Activated CD4-positive, alpha-beta T cell treated with anti-CD3 and anti-CD28 coated beads for 36 hours (primary cell): ENCODE measurements at regions of chr6 and their contacts with region 1.

Region 1: GRCh38 chr6:38493931-38494547 is 145.7 kb downstream of the BTBD9 start:
- DNase-seq: peak; percentile 89
- ATAC-seq: no peak
- H3K4me3 Mint-ChIP-seq: no peak overlapping the region
- H3K27ac Mint-ChIP-seq: no peak overlapping the region
- H3K4me1 Mint-ChIP-seq: peaks cover 7% of the 10 kb centered on the region
- H3K27me3 Mint-ChIP-seq: no peaks in the 10 kb centered on the region

Region 2: DNA sequence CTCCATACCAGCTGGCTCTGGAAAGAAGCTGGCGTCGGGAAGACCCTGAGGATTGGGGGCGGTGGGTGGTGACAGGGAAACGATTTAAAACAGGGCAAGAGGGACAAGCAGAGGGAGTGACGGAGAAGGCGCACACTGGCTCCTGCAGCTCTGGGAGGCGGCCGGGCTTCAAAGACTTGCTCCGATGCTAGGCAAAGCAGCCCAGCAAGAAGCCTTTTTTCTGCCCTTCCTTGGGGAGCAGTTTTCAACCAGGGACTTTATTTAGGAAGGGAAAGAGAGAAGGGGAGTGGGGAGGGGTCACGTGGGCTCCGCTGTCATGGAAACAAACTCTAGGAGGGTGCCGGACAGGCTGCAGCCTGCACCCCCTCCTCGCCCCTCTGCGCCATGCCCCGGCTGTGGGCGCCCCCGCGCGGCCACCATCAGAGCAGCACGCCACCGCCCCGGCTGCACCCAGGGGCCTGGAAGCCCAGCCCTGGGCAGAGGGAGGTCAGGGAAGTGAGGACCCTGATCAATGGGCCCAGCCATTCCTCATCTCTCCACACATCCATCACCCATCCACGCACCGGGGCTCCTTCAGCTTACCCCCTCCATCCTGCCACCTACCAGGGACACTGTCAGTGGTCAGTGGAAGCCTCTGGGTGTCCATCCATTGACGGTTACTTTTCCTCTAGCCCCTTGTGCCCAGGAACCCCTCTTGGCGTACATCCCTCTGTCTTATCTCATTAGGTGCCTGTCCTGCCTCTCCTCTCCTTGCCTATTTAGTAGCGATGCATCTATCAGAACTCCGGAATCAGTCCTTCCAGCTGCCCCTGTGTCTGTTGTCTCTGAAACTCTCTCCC is 927.7 kb before region 1 on chr6:
- CTCF ChIA-PET with region 1: no interaction called
- POLR2A ChIA-PET with region 1: no interaction called
- intact Hi-C with region 1: loop called in 1 of 2 experiments (anchors 5 kb)
- DNase-seq: peak; percentile 84
- ATAC-seq: peak; percentile 93
- H3K4me3 Mint-ChIP-seq: no peak overlapping the region
- H3K27ac Mint-ChIP-seq: no peak overlapping the region
- H3K4me1 Mint-ChIP-seq: peaks cover 11% of the 10 kb centered on the region
- H3K27me3 Mint-ChIP-seq: peaks cover 4% of the 10 kb centered on the region

Region 3: DNA sequence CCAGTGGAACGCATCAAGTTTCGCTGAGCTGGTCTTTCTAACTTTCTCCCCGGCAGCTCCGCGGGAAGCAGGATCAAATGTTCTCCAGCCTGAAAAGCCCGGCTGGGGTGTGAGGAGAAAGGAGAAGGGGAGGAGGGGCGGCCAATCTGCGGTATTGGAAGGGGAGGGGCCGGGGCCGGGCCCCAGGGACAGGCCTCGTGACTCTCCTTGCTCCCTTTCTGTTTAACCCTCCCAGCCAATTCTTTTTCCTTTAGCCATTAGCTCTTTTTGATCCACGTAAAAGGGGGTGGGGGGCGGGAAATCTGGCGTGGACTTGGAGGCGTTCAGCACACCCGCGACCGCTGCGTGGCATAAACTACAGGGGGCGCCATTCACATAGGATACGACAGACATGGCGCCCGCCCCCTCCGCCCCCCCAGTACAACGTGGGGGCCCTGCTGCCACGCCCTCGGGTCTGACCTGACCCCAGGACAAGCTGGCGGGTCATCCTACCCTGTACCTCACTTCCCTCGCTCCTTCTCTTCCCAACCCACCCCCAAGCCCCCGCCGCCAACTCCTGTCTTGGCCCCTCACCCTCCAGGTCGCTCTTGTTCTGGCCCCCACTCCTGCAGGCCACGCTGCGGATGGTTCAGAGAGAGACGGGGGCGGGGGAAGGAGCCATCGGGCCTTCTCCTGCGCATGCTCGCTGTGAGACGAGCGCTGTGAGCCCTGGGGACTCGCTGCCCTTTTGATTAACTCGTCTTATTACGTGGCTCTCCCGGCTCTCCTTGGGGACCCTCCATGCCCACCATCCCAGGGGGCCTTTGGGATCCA is 788.6 kb before region 1 on chr6:
- CTCF ChIA-PET with region 1: no interaction called
- POLR2A ChIA-PET with region 1: no interaction called
- intact Hi-C with region 1: loop called (anchors 1 to 5 kb)
- DNase-seq: peak; percentile 81
- ATAC-seq: peak; percentile 85
- H3K4me3 Mint-ChIP-seq: peak overlapping the region; percentile 57
- H3K27ac Mint-ChIP-seq: peak overlapping the region; percentile 10
- H3K4me1 Mint-ChIP-seq: peaks cover 11% of the 10 kb centered on the region
- H3K27me3 Mint-ChIP-seq: peaks cover 6% of the 10 kb centered on the region

Region 4: DNA sequence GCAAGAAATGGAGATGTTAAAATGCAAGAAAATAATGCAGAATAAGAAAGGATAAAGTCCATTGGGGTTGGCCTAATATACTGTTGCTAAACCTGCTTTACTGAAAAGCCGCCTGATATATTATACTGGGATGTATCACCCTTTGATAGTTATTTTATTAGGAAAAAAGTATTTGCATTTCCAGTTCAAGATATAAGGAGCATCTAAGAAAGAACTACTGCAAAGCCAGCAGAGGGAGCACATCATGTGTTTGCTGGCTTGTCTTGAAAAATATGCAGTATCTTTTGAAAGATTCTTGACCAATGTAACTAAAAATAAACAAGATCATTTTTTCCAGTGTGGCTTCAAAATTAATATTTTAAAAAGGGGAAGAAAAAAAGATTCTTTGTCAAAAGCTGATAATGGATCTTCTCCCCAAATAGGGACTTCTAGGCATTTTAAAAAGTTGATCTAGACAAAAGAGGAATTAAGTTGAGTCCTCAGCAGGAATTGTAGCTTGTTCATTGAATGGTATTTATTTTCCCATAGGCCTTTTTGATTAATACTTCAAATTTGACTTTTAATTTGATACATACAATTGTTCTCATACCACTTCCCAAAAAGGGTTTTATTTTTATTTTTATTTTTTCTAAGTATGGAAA is 459.6 kb before region 1 on chr6:
- CTCF ChIA-PET with region 1: interaction called, 4 read pairs
- POLR2A ChIA-PET with region 1: no interaction called
- intact Hi-C with region 1: loop called (anchors 5 kb)
- DNase-seq: no peak
- ATAC-seq: no peak
- H3K4me3 Mint-ChIP-seq: no peak overlapping the region
- H3K27ac Mint-ChIP-seq: no peak overlapping the region
- H3K4me1 Mint-ChIP-seq: peaks cover 42% of the 10 kb centered on the region
- H3K27me3 Mint-ChIP-seq: no peaks in the 10 kb centered on the region

Region 5: GRCh38 chr6:38508894-38509293 is 14.9 kb after region 1 on chr6:
- CTCF ChIA-PET with region 1: interaction called, 18 read pairs
- POLR2A ChIA-PET with region 1: no interaction called
- intact Hi-C with region 1: no loop called
- DNase-seq: no peak
- ATAC-seq: no peak
- H3K4me3 Mint-ChIP-seq: no peak overlapping the region
- H3K27ac Mint-ChIP-seq: no peak overlapping the region
- H3K4me1 Mint-ChIP-seq: no peaks in the 10 kb centered on the region
- H3K27me3 Mint-ChIP-seq: no peaks in the 10 kb centered on the region

Region 6: GRCh38 chr6:38671885-38672467 is 177.9 kb after region 1 on chr6:
- CTCF ChIA-PET with region 1: interaction called, 4 read pairs
- POLR2A ChIA-PET with region 1: no interaction called
- intact Hi-C with region 1: loop called (anchors 1 to 2 kb)
- DNase-seq: peak; percentile 41
- ATAC-seq: peak; percentile 90
- H3K4me3 Mint-ChIP-seq: no peak overlapping the region
- H3K27ac Mint-ChIP-seq: no peak overlapping the region
- H3K4me1 Mint-ChIP-seq: peaks cover 27% of the 10 kb centered on the region
- H3K27me3 Mint-ChIP-seq: no peaks in the 10 kb centered on the region